ENCODE measurements at regions of chr2 and their contacts with region 1.

Region 1: GRCh38 chr2:99337113-99338028 is at the start of gene EIF5B:
- DNase-seq: peak; percentile 94 to 100 (median 97)

Region 2: DNA sequence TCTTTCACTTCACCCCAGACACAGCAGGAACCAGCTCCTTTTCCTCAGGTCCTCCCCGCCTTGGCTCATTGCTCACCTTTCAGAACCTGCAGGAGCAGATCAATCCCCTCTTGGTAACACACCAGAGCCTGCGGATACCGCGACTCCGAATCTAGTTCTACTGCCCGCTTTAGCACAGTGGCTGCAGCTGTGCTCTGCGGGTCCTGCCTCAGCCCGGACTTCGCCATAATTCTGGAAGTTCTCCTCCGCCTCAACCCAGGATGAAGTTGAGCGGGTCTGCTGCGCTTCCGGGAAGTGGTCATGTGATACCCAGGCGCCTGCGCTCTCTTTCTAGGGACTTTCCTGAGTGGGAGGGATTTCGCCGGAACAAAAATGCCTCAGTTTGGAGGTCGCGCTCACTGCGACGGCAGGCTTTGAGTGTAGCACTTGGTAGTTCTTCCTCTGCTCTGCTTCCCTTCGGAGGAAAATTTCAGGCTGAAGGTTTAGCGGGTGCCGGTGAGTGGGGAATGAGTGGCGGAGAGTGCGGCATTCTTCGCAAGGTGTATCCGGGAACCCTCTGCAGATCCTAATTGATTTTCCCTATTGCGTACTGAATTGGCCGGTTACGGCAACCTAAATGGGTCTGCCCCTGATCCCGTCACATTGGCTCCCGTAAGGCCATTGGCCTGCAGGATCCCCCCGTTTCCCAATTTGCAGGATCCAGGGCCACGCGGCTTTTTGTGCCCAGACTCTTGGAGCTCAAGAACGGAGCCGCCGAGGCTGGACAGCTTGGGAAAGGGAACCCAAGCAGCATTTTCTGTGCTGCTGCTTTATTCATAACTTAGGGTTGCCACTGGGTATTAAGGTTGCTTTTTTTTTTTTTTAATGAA is 156.4 kb before region 1 on chr2 and contains the starts of genes MITD1 and MRPL30:
- intact Hi-C with region 1: loop called (anchors 1 kb)
- DNase-seq: peak; percentile 91 to 99 (median 95)